ENCODE measurements at regions of chr9 and their contacts with region 1.

Region 1: GRCh38 chr9:112174218-112174964 is 706 bp downstream of the SUSD1 start:
- DNase-seq: peak; percentile 86
- ATAC-seq: peak; percentile 79
- H3K4me3 Mint-ChIP-seq: peak overlapping the region; percentile 89
- H3K27ac Mint-ChIP-seq: peak overlapping the region; percentile 88
- H3K4me1 Mint-ChIP-seq: peaks cover 56% of the 10 kb centered on the region
- H3K27me3 Mint-ChIP-seq: peaks cover 17% of the 10 kb centered on the region

Region 2: DNA sequence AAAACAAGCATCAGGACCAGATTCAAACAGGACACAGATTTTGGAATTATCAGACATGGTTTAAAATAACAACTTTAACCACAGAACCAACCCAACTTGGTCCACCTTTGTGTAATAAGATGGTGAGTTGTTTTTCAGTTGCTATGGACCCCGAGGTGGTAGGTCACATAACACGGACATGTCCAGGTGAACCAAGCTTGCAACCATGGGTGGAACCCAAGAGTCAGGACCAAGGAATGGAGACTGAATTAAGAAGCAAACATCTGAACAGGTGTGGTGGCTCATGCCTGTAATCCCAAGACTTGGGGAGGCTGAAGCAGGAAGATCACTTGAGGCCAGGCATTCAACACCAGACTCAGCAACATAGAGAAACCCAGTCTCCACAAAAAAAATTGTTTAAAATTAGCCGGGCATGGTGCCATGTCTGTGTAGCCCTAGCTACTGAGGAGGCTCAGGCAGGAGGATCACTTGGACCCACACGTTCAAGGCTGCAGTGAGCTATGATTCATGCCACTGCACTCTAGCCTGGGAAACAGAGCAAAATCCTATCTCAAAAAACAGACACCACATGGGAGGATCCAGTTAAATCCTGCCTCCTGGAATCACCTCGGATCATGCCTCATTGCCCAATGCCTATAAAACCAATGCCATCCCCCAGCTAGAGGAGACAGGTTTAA is 148.4 kb after region 1 on chr9:
- POLR2A ChIA-PET with region 1: interaction called, 10 read pairs
- DNase-seq: no peak
- ATAC-seq: no peak
- H3K4me3 Mint-ChIP-seq: no peak overlapping the region
- H3K27ac Mint-ChIP-seq: peak overlapping the region; percentile 36
- H3K4me1 Mint-ChIP-seq: peaks cover 43% of the 10 kb centered on the region
- H3K27me3 Mint-ChIP-seq: no peaks in the 10 kb centered on the region

Measured in activated naive CD8-positive, alpha-beta T cell treated with anti-CD3 and anti-CD28 coated beads, Interleukin-2, amount 10 ng/mL, durations not matched to agents 7 days and 5 days (primary cell).